AG04450 (cell line): ENCODE measurements at regions of chr1 and their contacts with region 1.

Region 1: DNA sequence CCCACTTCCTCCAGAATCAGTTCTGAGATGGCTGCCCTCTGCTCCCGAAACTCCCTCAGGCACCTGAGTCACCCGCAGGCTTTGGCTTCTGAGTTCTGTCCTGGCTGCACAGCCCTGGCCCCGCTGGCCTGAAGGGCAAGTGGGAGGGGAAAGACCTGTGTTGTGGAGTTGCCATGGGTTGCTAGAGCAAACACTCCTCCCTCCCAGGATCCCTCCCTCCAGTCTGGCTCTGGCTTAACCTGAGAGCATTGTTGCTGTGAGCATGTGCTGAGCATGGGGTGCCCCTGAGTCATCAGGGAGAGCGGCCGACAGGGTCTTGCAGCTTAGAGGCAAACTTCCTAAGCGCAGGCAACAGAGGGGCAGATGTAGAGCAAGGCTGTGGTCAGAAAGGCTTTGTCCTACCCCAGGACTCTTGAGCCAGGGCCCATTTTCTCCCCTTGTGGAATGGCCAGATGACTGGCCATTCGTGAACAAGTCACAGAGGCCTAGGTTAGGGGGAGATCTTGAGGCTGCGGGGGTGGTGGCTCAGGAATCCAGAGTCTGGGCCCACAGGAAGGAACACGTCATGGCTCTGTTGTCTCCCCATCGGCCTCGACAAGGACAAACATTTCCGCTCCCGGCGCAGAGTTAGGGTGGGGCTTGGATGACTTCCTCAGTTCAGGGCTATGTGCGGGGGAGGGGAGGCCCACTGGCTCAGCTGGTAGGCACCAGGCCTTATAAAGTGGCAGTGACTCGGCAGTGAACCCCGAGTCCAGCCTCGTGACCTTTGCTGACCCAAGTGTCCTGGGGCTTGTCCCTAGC is at the start of gene DYNLT4:
- DNase-seq: peak; percentile 98
- H3K4me3 ChIP-seq: peak within 1 kb of the TSS; percentile 63
- H3K27ac ChIP-seq: peak within 1 kb of the TSS; percentile 100
- H3K27me3 ChIP-seq: no peaks in the 10 kb centered on the region
- CTCF ChIP-seq: no peak
- polyA plus RNA-seq, gene DYNLT4: not detected in 2 replicates

Region 2: GRCh38 chr1:44757420-44757819 is 50.0 kb before region 1 on chr1:
- CTCF ChIA-PET with region 1: no interaction called
- POLR2A ChIA-PET with region 1: no interaction called
- DNase-seq: no peak
- H3K4me3 ChIP-seq: no peak overlapping the region
- H3K27ac ChIP-seq: no peak overlapping the region
- H3K27me3 ChIP-seq: no peaks in the 10 kb centered on the region
- CTCF ChIP-seq: no peak

Region 3: GRCh38 chr1:44819608-44820327 is 12.3 kb after region 1 on chr1:
- CTCF ChIA-PET with region 1: no interaction called
- POLR2A ChIA-PET with region 1: interaction called, 103 read pairs
- DNase-seq: peak; percentile 89
- H3K4me3 ChIP-seq: peak overlapping the region; percentile 62
- H3K27ac ChIP-seq: peak overlapping the region; percentile 99
- H3K27me3 ChIP-seq: no peaks in the 10 kb centered on the region
- CTCF ChIP-seq: no peak